BJ (cell line): ENCODE measurements at regions of chr1 and their contacts with region 1.

Region 1: DNA sequence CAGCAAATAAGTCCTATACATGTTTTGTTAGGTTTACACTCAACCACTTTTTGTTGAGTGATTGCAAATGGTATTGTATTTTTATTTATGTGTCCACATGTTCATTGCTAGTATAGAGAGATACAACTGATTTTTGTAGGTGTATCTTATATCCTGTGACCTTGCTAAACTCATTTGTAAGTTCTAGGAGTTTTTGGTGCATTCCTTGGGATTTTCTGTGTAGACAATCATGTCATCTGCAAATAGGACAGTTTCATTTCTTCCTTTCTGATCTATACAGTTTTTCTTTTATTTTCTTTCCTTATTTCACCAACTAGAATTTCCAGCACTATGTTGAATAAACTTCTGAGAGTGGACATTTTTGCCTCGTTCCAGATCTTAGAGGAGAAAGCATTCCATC is 16.5 kb upstream of the BATF3 start:
- DNase-seq: no peak
- H3K4me3 ChIP-seq: no peak overlapping the region
- H3K27me3 ChIP-seq: no peaks in the 10 kb centered on the region
- CTCF ChIP-seq: no peak

Region 2: DNA sequence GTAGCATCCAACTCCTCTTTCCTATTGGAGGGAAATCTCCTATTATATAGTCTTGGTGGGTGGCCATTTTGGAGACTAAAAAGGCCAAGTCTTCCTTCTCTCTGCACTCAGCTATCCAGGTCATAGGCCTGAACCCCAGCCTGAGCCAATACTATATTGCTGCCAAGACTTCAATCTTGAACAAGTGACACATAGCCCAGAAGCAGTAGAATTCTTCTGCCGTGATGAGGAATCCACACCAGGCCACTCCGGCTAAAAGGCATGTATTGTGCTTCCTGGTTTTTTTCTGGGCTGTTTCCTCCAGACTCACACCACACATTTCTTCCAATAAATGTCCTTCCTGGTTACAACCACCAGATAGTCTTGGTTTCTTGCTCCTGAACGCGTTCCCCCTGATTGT is 64.6 kb before region 1 on chr1:
- CTCF ChIA-PET with region 1: no interaction called
- POLR2A ChIA-PET with region 1: no interaction called
- DNase-seq: no peak
- H3K4me3 ChIP-seq: no peak overlapping the region
- H3K27me3 ChIP-seq: no peaks in the 10 kb centered on the region; the same call in 1 of the 2 replicates
- CTCF ChIP-seq: no peak

Region 3: DNA sequence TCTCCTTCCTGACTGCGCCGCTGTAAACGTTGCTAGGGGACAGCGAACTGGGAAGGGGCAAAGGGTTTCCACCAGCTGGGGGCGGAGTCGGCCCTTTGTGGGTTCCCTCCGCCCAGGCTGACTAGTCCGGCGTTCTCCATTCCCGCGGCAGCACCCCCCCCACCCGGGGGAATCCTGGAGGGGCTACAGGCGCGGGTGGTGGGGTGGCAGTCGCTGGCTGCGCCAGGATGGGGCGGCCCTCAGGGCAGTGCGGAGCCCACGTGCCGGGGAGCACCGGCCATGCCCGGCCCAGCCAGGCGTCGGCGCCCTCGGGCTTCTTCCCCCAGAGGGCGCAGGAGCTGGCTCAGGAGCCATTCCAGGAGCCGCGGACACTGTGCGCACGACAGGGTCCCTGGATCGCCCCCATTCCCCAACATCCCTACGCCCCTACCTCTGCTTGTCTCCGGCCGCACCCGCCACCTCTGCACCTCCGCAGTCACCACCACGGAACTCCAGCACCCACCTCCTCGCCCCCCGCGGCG is 17.0 kb before region 1 on chr1:
- CTCF ChIA-PET with region 1: interaction called, 5 read pairs
- POLR2A ChIA-PET with region 1: interaction called, 16 read pairs
- DNase-seq: no peak
- H3K4me3 ChIP-seq: peak overlapping the region; percentile 60
- H3K27me3 ChIP-seq: peaks cover 6% of the 10 kb centered on the region
- CTCF ChIP-seq: peak; percentile 57